A673 (cell line): ENCODE measurements at regions of chr17 and their contacts with region 1.

Region 1: GRCh38 chr17:49230636-49231562 is at the start of gene PHOSPHO1:
- DNase-seq: peak; percentile 94
- H3K4me3 ChIP-seq: peak within 1 kb of the TSS; percentile 76
- H3K27ac ChIP-seq: peak within 1 kb of the TSS; percentile 86
- H3K4me1 ChIP-seq: peaks cover 22% of the 10 kb centered on the region
- H3K27me3 ChIP-seq: no peaks in the 10 kb centered on the region
- CTCF ChIP-seq: no peak
- total RNA-seq, gene PHOSPHO1: 88.6 and 98.3 TPM in 2 replicates

Region 2: GRCh38 chr17:48985436-48986245 is 245.3 kb before region 1 on chr17:
- CTCF ChIA-PET with region 1: no interaction called
- POLR2A ChIA-PET with region 1: no interaction called
- intact Hi-C with region 1: loop called (anchors 5 kb)
- DNase-seq: no peak
- H3K4me3 ChIP-seq: no peak overlapping the region
- H3K27ac ChIP-seq: peak overlapping the region; percentile 34
- H3K4me1 ChIP-seq: peaks cover 42% of the 10 kb centered on the region
- H3K27me3 ChIP-seq: no peaks in the 10 kb centered on the region
- CTCF ChIP-seq: no peak

Region 3: GRCh38 chr17:49191917-49192741 is 38.8 kb before region 1 on chr17:
- CTCF ChIA-PET with region 1: no interaction called
- POLR2A ChIA-PET with region 1: no interaction called
- intact Hi-C with region 1: loop called (anchors 5 kb)
- DNase-seq: peak; percentile 94
- H3K4me3 ChIP-seq: peak overlapping the region; percentile 82
- H3K27ac ChIP-seq: peak overlapping the region; percentile 99
- H3K4me1 ChIP-seq: peaks cover 11% of the 10 kb centered on the region
- H3K27me3 ChIP-seq: no peaks in the 10 kb centered on the region
- CTCF ChIP-seq: peak; percentile 60

Region 4: GRCh38 chr17:49290690-49291359 is 59.9 kb after region 1 on chr17:
- CTCF ChIA-PET with region 1: interaction called, 3 read pairs
- POLR2A ChIA-PET with region 1: no interaction called
- intact Hi-C with region 1: loop called (anchors 2 kb)
- DNase-seq: peak; percentile 76
- H3K4me3 ChIP-seq: no peak overlapping the region
- H3K27ac ChIP-seq: peak overlapping the region; percentile 44
- H3K4me1 ChIP-seq: peaks cover 11% of the 10 kb centered on the region
- H3K27me3 ChIP-seq: no peaks in the 10 kb centered on the region
- CTCF ChIP-seq: peak; percentile 88

Region 5: DNA sequence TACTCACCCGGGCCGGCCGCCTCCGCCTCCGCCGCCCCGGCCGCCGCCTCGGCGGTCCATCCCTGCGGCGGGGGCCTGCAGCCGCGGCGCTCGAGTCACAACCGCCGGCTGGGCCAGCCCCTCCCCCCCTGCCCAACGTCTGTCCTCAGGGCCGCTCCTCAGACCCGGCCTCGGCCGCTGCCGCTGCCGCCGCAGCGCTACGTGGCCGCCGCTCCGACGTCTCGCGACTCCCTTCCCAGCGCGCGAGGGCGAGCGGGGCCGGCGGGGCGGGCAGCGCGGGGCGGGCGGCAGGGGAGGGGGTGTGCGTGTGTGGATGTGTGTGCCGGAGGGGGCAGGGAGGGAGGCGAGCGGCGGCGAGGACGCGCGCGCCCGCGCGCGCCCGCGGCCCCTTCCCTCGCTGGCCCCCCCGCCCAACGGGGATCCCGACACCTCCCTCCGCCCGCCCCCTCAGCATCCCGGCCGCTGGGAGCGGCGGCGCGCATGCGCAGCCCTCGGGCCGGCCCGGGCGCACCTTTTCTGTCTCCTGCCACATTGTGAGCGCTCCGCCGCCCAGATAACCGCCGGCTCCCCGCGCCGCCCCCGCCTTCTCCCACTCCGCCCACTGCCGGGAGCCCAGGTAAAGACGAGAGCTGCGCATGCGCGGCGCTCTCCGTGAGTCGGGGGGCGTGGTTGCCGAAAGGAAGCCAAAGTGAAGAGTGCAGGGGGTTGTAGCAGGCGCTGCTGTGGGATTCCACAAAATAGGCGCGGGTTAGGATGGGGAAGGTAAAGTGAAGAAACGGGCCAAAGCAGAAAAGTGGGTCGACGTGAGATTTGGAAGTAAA is 131.2 kb after region 1 on chr17 and contains the start of gene ZNF652:
- CTCF ChIA-PET with region 1: no interaction called
- POLR2A ChIA-PET with region 1: interaction called, 10 read pairs
- intact Hi-C with region 1: no loop called
- DNase-seq: peak; percentile 92
- H3K4me3 ChIP-seq: peak within 1 kb of the TSS; percentile 89
- H3K27ac ChIP-seq: peak within 1 kb of the TSS; percentile 85
- H3K4me1 ChIP-seq: peaks cover 29% of the 10 kb centered on the region
- H3K27me3 ChIP-seq: no peaks in the 10 kb centered on the region
- CTCF ChIP-seq: no peak
- total RNA-seq, gene ZNF652: 32.1 and 41.5 TPM in 2 replicates